Right ventricle myocardium inferior (tissue), 1 donor: ENCODE measurements at regions of chr3 and their contacts with region 1.

Region 1: DNA sequence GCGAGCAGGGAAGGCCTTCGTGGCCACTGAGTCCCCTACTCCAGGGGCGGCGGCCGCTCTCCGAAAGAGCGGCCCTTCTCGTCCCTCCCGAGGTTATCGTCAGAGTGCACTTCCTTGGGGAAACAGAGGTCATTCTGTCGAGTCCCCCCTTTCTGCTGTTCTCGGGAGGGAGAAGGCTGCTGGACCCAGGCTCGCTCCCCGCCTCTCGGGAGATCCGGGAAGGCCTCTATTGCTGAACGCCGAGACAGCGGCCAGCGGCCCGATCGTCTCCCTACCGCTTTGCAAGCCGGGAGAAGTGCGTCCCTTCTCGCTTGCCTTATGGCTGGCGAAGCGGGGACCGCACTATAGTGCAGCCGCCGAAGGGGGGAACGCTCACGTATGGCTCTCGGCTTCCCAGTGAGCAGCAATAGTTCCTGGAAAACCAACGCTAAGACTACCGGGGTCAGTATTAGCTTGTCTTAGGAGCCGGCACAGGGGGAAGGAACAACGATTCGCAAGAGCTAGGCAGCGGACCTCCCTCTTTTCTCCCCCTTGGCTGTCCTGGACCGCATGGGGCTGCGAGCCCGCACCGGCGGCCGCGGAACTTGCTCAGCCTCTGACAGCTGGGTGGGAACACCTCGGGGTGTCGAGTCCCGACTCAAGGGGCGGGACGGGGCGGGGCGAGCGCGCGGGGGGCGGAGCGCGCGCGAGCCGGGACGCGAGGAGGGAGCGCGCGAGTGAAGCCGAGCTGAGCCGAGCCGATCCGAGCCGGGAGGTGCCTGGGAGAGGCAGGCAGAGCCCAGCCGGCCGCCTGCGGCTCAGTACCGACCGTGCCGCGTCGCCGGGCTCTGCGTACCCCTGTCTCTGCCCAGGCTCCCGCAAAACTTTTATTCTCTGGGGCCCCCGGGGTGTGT is 930 bp upstream of the PPM1L start:
- DNase-seq: peak; percentile 95
- ATAC-seq: peak; percentile 95

Region 2: GRCh38 chr3:160565442-160566403 is 189.4 kb before region 1 on chr3 and contains the start of gene KPNA4:
- intact Hi-C with region 1: loop called (anchors 5 kb)
- DNase-seq: peak; percentile 99
- ATAC-seq: peak; percentile 98
- total RNA-seq, gene KPNA4: 120 TPM

Region 3: GRCh38 chr3:160801386-160802118 is 46.5 kb after region 1 on chr3:
- intact Hi-C with region 1: loop called (anchors 2 kb)
- DNase-seq: peak; percentile 62
- ATAC-seq: peak; percentile 84

Region 4: DNA sequence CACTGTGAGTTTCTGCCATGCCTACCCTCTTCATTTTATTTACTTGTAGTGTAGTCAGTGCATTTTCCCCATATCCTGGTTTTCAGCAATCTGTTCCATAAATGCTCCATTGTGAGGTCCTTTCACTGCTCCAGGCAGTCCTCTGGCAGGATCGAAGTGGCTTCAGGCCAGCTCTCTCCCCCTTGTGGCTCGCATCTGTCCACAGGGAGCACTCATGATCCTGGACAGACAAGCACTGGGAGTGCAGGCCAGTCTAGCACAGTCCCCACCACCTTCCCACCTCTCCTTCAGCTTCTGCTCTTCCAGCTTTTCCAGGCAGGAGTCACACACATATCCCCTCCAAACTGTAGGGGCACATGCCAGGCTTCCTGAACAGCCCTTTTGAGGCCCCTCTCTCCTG is 174.5 kb after region 1 on chr3:
- intact Hi-C with region 1: loop called (anchors 5 kb)
- DNase-seq: peak; percentile 67
- ATAC-seq: peak; percentile 91

Region 5: GRCh38 chr3:160981217-160981938 is 226.3 kb after region 1 on chr3:
- intact Hi-C with region 1: no loop called
- DNase-seq: no peak
- ATAC-seq: peak; percentile 57

Region 6: GRCh38 chr3:161104561-161105551 is 349.8 kb after region 1 on chr3 and contains the start of gene B3GALNT1:
- intact Hi-C with region 1: loop called (anchors 10 kb)
- DNase-seq: peak; percentile 75
- ATAC-seq: peak; percentile 75
- total RNA-seq, gene B3GALNT1: 51.8 TPM